ENCODE measurements at regions of chr17 and their contacts with region 1.

Region 1: GRCh38 chr17:8118769-8119580 is 661 bp upstream of the ALOXE3 start:
- DNase-seq: peak; percentile 83
- H3K4me3 ChIP-seq: peak overlapping the region; percentile 59
- CTCF ChIP-seq: peak; percentile 92

Region 2: DNA sequence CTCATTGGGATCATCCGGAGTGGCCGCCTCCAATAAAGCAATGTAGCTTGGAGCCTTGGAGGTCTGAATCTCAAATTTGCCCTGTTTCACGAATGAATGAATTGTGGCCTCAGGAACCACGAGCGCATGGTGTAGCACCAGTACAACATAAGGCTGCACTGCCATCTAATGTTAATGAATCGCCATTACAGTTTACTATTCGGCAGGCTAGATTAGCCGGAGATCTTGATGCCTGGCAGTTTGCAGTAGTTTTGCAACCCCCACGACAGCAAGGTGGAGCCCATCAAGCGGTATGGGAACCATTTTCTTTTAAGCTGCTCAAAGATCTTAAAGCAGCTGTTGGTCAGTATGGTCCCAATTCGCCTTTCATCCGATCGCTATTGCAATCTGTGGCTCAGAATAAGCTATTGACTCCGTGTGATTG is 61.3 kb before region 1 on chr17:
- in situ Hi-C with region 1: loop called (anchors 10 kb)
- DNase-seq: peak; percentile 71
- H3K4me3 ChIP-seq: no peak overlapping the region
- CTCF ChIP-seq: peak; percentile 71

Region 3: DNA sequence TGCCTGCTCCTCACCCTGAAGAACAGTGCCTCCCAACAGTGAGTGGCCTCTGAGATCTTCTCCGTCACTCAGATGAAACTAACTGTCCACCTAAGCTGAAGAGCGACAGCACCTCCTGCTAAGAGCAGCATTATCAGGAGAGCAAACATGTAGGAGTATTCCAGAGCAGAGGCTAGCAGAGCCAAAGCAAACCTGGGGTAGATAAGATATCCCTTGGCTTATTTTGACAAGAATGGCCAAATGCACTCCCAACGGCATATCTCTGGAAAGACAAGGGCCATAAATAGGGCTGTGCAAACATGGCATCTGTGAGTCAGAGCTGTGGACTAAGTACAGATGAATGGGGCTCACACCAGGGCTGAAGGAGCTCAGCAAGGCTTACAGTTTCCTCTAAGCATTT is 413.0 kb after region 1 on chr17:
- in situ Hi-C with region 1: no loop called
- DNase-seq: peak; percentile 7
- H3K4me3 ChIP-seq: no peak overlapping the region
- CTCF ChIP-seq: no peak

Measured in astrocyte of the spinal cord (primary cell).